Ovary (tissue), 10 donors: ENCODE measurements at regions of chr11 and their contacts with region 1.

Region 1: DNA sequence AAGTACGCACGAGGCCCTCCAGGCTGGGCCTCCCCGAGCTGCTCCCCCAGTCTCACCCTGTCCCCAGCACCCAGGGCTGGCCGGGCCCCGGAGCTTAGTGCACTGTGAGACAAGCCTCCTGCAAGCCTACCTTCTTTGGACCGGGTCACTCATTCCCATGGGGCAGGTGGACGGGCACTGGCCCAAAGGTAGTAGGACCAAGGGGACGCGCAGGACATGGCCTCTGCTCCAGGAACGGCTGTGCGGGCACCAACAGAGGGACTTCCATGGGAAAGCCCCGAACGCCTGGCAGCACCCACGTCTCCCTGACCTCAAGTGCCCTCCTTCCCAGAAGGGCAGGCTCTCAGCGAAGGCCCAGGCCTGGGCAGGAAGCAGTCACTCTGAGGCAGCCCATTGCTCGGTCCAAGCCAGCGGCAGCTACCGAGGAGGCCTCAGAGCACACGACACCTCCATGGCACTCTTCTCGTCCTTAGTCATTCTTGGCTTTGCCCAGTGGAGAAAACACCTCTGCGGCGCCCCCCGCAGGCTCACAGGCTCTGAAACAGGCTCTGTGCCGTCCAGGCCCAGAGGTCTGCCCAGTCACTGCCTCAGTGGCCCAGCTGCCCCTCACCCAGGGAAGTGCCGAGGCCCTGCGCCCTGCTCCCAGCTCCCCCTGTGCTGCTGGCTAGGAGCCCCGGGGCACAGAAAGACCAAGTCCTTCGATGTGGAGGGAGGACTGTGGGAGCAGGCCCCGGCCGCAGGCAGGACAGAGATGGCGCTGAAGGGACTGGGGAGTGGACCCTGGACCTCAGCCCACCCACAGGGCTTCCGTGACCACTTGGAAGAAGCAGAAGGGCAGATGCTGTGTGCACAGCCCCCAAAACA is 3.8 kb downstream of the MOB2 start:
- DNase-seq: peak in 3 of 5 donors; percentile 28 to 43 (median 37)
- H3K4me3 ChIP-seq: no peak overlapping the region
- H3K27ac ChIP-seq: peak overlapping the region; percentile 14 to 71
- H3K4me1 ChIP-seq: peaks cover 41% of the 10 kb centered on the region
- H3K27me3 ChIP-seq: no peaks in the 10 kb centered on the region
- CTCF ChIP-seq: no peak
- EP300 ChIP-seq: no peak
- POLR2A ChIP-seq: no peak

Region 2: DNA sequence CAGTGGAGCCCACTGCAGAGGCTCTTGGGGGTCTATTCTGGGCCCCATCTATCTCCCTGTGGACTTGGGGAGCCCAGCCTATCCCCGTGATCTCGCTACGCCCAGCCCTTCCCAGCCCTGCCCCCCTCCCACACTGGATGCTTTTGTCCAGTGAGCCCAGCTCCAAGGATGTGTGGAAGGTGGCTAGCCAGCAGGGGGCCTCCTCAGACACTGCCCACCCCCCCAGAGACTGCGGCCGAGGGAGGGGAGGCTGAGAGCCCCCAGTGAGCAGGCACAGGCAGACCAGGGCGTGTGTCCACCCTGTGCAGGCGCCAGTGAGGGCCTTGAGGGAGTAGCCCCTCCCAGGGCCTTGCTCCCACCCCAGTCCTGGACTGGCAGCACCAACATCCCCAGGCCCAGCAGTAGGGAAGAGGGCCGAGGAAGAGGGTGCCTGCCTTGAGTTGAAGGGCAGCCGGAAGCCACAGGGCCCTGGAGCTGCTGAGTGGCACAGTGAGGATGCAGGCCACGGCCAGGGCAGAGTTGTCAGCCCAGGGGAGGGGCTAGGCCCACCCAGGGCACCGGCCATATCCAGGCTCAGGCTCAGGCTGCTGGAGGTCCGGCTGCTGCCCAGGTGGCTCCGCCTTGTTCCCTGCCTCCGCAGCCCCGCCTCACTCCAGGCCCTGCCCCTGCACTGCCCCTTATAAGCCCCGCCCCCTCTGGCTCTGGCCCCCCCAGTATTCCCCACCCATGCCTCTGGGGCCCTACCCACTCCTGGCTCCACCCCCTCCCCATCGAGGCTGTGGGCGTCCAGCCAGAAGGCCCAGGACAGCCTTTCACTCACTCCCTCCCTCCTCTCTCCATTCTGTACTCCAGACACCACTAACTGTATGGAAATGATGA is 24.2 kb before region 1 on chr11:
- intact Hi-C with region 1: loop called in 1 of 4 experiments (anchors 1 kb)
- DNase-seq: peak; percentile 85 to 93 (median 86)
- H3K4me3 ChIP-seq: no peak overlapping the region
- H3K27ac ChIP-seq: peak overlapping the region; percentile 80 to 92
- H3K4me1 ChIP-seq: peaks cover 19% of the 10 kb centered on the region
- H3K27me3 ChIP-seq: no peaks in the 10 kb centered on the region
- CTCF ChIP-seq: peak in 2 of 3 donors; percentile 15 to 25
- EP300 ChIP-seq: no peak
- POLR2A ChIP-seq: no peak